ENCODE measurements at regions of chr9 and their contacts with region 1.

Region 1: DNA sequence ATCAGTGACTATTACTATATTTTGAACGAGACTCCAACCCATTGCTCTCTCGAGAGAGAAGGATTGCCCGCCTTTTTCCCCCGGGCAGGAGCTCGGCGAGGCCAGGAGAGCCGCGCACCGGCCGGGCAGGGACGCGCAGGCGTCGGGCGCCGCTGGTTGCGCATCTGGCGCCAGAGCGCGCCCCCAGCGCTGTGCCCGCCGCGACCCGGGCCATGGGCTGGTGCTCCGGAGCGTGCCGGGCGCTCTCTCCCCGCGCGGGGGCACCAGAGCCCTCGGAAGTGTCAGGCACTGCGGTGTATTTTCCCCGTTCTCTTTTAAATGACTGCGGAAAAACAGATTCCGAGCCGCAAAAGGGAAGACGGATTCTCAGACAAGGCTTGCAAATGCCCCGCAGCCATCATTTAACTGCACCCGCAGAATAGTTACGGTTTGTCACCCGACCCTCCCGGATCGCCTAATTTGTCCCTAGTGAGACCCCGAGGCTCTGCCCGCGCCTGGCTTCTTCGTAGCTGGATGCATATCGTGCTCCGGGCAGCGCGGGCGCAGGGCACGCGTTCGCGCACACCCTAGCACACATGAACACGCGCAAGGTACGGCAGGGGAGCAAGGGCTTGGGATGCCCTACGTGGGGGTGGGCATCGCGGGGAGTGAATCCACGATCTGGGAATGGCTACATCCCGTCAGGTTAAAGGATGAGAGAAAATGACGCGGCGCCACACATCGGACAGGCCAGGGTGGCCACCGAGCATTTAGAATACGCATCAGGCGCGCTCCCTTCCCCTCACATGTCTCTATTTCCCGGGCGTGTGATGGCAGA is 1.1 kb upstream of the NTRK2 start:
- DNase-seq: peak; percentile 72 to 88
- H3K4me3 ChIP-seq: peak overlapping the region; percentile 64 to 91
- H3K27ac ChIP-seq: peak overlapping the region; percentile 91 to 92
- H3K4me1 ChIP-seq: peaks cover 0 to 14% (median 5%) of the 10 kb centered on the region in 4 donors
- H3K27me3 ChIP-seq: no peaks in the 10 kb centered on the region
- CTCF ChIP-seq: peak; percentile 74 to 79

Region 2: DNA sequence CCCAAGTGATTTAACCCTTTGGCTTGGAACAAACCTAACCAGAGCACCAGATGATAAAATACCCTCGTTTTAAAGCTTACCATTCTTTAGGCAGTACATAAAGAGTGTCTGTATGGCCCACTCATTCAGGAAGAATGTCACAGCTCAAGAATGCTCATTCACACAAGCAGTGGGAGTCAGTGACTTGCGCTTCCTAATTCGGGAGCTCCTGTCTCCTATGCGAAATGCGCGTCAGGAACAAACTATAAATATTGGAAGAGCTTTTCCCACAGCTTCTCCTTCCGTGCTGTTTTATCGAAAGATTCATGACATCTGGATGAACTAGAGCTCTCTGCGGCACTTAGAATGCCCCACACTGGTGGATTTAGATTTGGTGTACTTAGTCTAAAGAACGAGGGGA is 67.7 kb after region 1 on chr9:
- intact Hi-C with region 1: no loop called
- DNase-seq: no peak
- H3K4me3 ChIP-seq: no peak overlapping the region
- H3K27ac ChIP-seq: no peak overlapping the region
- H3K4me1 ChIP-seq: no peaks in the 10 kb centered on the region
- H3K27me3 ChIP-seq: no peaks in the 10 kb centered on the region
- CTCF ChIP-seq: no peak

Region 3: DNA sequence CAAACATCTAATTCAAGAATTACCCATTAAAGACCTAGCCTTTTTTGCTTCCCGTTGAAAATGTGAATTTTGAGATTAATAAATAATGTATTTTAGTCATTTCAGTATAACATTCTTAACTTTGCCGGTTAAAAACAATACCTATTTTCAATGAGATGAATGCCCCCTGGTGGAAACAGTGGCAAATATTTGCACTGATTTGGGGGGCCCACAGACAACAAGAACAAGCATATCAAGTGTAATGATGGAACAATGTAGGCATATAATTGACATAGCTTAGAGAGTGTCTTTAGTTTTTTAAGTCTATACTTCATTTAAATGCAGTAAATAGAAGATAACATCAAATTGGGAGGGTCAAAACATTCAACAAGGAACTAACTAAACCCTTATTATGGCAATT is 113.1 kb after region 1 on chr9:
- intact Hi-C with region 1: loop called (anchors 10 kb)
- DNase-seq: peak in 1 of 2 donors; percentile 28
- H3K4me3 ChIP-seq: no peak overlapping the region
- H3K27ac ChIP-seq: peak overlapping the region; percentile 48 to 72
- H3K4me1 ChIP-seq: peaks cover 0 to 26% (median 11%) of the 10 kb centered on the region in 4 donors
- H3K27me3 ChIP-seq: no peaks in the 10 kb centered on the region
- CTCF ChIP-seq: peak; percentile 38 to 48

Measured in tibial artery (tissue), 4 donors.